ENCODE measurements at regions of chr1 and their contacts with region 1.

Region 1: GRCh38 chr1:100921109-100921706 is 25.3 kb downstream of the SLC30A7 start:
- DNase-seq: no peak
- H3K4me3 ChIP-seq: no peak overlapping the region
- H3K27ac ChIP-seq: no peak overlapping the region
- H3K4me1 ChIP-seq: no peaks in the 10 kb centered on the region
- H3K27me3 ChIP-seq: no peaks in the 10 kb centered on the region
- CTCF ChIP-seq: peak; percentile 36 to 54 (median 48)
- EP300 ChIP-seq: no peak
- POLR2A ChIP-seq: no peak

Region 2: DNA sequence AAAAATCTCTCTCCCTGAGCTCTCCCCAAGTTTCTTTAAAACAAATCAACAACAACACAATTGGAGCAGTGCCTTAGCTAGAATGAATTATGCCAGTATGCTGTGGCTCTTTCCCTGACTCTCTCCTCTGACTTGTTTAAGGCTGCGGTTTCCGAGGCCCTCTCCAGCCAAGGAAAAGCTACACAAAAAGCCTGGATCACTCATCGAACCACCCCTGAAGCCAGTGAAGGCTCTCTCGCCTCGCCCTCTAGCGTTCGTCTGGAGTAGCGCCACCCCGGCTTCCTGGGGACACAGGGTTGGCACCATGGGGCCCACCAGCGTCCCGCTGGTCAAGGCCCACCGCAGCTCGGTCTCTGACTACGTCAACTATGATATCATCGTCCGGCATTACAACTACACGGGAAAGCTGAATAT is 317.5 kb after region 1 on chr1:
- intact Hi-C with region 1: loop called in 1 of 4 experiments (anchors 10 kb)
- DNase-seq: peak; percentile 55 to 79 (median 77)
- H3K4me3 ChIP-seq: no peak overlapping the region
- H3K27ac ChIP-seq: no peak overlapping the region
- H3K4me1 ChIP-seq: peaks cover 4% of the 10 kb centered on the region
- H3K27me3 ChIP-seq: no peaks in the 10 kb centered on the region
- CTCF ChIP-seq: peak; percentile 45 to 74 (median 49)
- EP300 ChIP-seq: no peak
- POLR2A ChIP-seq: no peak

Region 3: GRCh38 chr1:101288491-101288944 is 367.3 kb after region 1 on chr1:
- intact Hi-C with region 1: loop called in 2 of 4 experiments (anchors 10 kb)
- DNase-seq: peak; percentile 50 to 72 (median 57)
- H3K4me3 ChIP-seq: no peak overlapping the region
- H3K27ac ChIP-seq: no peak overlapping the region
- H3K4me1 ChIP-seq: no peaks in the 10 kb centered on the region
- H3K27me3 ChIP-seq: no peaks in the 10 kb centered on the region
- CTCF ChIP-seq: peak; percentile 66 to 89 (median 72)
- EP300 ChIP-seq: no peak
- POLR2A ChIP-seq: no peak

Measured in ovary (tissue), 10 donors.